ENCODE measurements at regions of chr3 and their contacts with region 1.

Region 1: DNA sequence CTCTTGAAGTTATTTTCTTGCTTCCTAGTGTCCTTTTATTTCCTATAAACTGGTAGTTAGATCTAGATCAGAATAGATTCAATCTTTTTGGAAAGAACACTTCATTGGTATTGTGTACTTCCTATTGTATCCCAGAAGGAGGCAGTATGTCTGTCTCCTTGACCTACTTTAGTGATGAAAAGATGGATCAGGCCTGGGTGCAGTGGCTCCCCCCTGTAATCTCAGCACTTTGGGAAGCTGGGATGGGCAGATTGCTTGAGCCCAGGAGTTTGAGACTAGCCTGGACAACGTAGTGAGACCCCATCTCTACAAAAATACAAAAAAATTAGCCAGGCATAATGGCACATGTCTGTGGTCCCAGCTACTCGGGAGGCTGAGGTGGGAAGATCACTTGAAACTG is 12.0 kb downstream of the BSN start:
- DNase-seq: no peak
- H3K4me3 ChIP-seq: no peak overlapping the region
- H3K27ac ChIP-seq: no peak overlapping the region
- H3K4me1 ChIP-seq: peaks cover 0 to 12% (median 6%) of the 10 kb centered on the region in 4 experiments; a peak in 5 of 7 replicates
- H3K27me3 ChIP-seq: no peaks in the 10 kb centered on the region
- CTCF ChIP-seq: peak in 2 of 3 experiments; percentile 42 to 69; a peak in 3 of 4 replicates
- EP300 ChIP-seq: no peak
- POLR2A ChIP-seq: no peak
- RAD21 ChIP-seq: peak; percentile 53 to 57

Region 2: GRCh38 chr3:49469936-49470713 is 96.2 kb before region 1 on chr3 and contains the start of gene DAG1:
- CTCF ChIA-PET with region 1: no interaction called
- POLR2A ChIA-PET with region 1: no interaction called
- DNase-seq: peak; percentile 87 to 98
- H3K4me3 ChIP-seq: peak within 1 kb of the TSS; percentile 74 to 94 (median 84)
- H3K27ac ChIP-seq: peak within 1 kb of the TSS; percentile 92
- H3K4me1 ChIP-seq: peaks cover 6 to 19% (median 13%) of the 10 kb centered on the region in 4 experiments
- H3K27me3 ChIP-seq: no peaks in the 10 kb centered on the region
- CTCF ChIP-seq: no peak
- EP300 ChIP-seq: no peak
- POLR2A ChIP-seq: peak; percentile 58 to 83
- RAD21 ChIP-seq: no peak
- total RNA-seq, gene DAG1: 137 and 138 TPM in 2 replicates

Region 3: DNA sequence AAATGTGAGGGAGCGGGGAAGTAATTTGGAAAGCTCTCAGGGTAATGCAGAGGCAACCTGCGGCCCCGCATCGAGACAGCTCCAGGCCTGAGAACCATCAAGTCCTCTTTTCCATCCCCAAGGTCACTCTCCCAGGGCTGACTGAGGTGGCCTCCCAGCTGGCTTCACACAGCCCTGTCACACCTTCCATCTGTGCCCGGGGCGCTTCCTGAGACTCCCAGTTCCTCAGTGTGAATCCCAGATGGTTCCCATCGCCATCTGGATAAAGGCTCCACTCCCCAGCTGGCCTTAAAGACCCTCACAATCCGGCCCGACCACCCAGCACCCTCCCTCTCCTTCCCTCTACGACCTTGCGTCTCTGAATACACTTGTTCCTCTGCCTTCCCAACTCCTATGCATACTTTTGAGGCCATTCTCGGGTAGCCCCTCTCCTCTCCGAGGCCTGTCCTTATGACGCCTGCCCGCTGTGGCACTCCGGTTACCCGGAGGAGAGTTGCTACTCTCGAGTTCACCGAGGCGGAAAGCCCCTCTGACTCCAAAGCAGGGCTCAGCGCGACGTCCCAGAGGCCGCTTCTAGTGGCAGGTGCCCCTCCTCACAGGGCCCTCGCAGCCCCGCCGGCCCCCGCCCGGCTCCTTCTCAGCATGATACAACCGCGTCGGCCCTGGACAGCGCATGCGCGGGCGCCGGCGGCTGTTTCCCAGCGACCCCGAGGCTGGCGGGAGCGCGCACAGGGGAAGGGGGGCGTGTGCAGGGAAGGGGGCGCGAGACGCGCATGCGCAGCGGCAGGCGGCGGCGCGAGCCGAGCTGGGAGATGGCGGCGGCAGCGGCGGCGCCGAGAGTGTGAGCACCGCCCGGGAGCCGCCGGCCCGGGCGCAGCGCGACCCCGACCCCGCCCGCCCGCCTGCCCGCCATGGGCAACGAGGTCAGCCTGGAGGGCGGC is 12.3 kb before region 1 on chr3 and contains the start of gene BSN:
- CTCF ChIA-PET with region 1: interaction called, 19 read pairs
- POLR2A ChIA-PET with region 1: no interaction called
- DNase-seq: peak; percentile 76 to 97
- H3K4me3 ChIP-seq: peak within 1 kb of the TSS; percentile 78 to 96 (median 90)
- H3K27ac ChIP-seq: peak within 1 kb of the TSS; percentile 27; the same call in 1 of the 2 replicates
- H3K4me1 ChIP-seq: peaks cover 0 to 14% (median 4%) of the 10 kb centered on the region in 4 experiments; a peak in 5 of 7 replicates
- H3K27me3 ChIP-seq: peaks cover 0 to 11% (median 6%) of the 10 kb centered on the region in 4 experiments; a peak in 3 of 7 replicates
- CTCF ChIP-seq: peak in 1 of 3 experiments; percentile 2; a peak in 1 of 4 replicates
- EP300 ChIP-seq: no peak
- POLR2A ChIP-seq: no peak
- RAD21 ChIP-seq: no peak
- total RNA-seq, gene BSN: 2.9 and 3.0 TPM in 2 replicates

Region 4: DNA sequence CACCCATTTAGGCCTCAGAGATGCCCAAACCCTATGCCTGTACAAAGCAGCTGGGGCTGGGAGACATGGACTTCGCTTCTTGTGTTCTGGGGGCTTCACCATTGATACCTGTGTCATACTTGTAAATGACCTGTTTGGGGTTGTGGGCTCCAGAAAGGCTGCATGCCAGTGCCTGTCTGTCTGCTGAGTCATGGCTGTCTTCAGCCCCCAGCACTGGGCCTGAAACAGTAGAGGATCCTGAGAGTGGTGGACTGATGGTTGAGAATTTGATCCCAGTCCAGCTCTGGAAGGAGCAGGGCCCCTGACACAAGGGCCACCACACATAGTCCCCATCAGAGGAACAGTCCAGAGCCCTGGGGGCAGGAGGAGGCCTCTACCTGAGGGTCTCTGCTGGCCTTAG is 83.3 kb after region 1 on chr3:
- CTCF ChIA-PET with region 1: interaction called, 12 read pairs
- POLR2A ChIA-PET with region 1: no interaction called
- DNase-seq: no peak
- H3K4me3 ChIP-seq: no peak overlapping the region
- H3K27ac ChIP-seq: no peak overlapping the region
- H3K4me1 ChIP-seq: no peaks in the 10 kb centered on the region; a peak in 1 of 7 replicates
- H3K27me3 ChIP-seq: no peaks in the 10 kb centered on the region
- CTCF ChIP-seq: no peak
- EP300 ChIP-seq: no peak
- POLR2A ChIP-seq: no peak
- RAD21 ChIP-seq: no peak

Region 5: GRCh38 chr3:49656541-49657112 is 90.3 kb after region 1 on chr3:
- CTCF ChIA-PET with region 1: interaction called, 12 read pairs
- POLR2A ChIA-PET with region 1: interaction called, 3 read pairs
- DNase-seq: no peak
- H3K4me3 ChIP-seq: no peak overlapping the region
- H3K27ac ChIP-seq: no peak overlapping the region
- H3K4me1 ChIP-seq: no peaks in the 10 kb centered on the region
- H3K27me3 ChIP-seq: no peaks in the 10 kb centered on the region
- CTCF ChIP-seq: peak in 2 of 3 experiments; percentile 10 to 16; a peak in 1 of 4 replicates
- EP300 ChIP-seq: no peak
- POLR2A ChIP-seq: no peak
- RAD21 ChIP-seq: peak in 1 of 2 experiments; percentile 38; a peak in 1 of 4 replicates

Region 6: GRCh38 chr3:49666592-49666991 is 100.3 kb after region 1 on chr3:
- CTCF ChIA-PET with region 1: interaction called, 101 read pairs
- POLR2A ChIA-PET with region 1: interaction called, 4 read pairs
- DNase-seq: no peak
- H3K4me3 ChIP-seq: no peak overlapping the region
- H3K27ac ChIP-seq: no peak overlapping the region
- H3K4me1 ChIP-seq: peaks cover 0 to 8% (median under 1%) of the 10 kb centered on the region in 4 experiments; a peak in 1 of 7 replicates
- H3K27me3 ChIP-seq: no peaks in the 10 kb centered on the region
- CTCF ChIP-seq: no peak
- EP300 ChIP-seq: no peak
- POLR2A ChIP-seq: no peak
- RAD21 ChIP-seq: no peak

Region 7: DNA sequence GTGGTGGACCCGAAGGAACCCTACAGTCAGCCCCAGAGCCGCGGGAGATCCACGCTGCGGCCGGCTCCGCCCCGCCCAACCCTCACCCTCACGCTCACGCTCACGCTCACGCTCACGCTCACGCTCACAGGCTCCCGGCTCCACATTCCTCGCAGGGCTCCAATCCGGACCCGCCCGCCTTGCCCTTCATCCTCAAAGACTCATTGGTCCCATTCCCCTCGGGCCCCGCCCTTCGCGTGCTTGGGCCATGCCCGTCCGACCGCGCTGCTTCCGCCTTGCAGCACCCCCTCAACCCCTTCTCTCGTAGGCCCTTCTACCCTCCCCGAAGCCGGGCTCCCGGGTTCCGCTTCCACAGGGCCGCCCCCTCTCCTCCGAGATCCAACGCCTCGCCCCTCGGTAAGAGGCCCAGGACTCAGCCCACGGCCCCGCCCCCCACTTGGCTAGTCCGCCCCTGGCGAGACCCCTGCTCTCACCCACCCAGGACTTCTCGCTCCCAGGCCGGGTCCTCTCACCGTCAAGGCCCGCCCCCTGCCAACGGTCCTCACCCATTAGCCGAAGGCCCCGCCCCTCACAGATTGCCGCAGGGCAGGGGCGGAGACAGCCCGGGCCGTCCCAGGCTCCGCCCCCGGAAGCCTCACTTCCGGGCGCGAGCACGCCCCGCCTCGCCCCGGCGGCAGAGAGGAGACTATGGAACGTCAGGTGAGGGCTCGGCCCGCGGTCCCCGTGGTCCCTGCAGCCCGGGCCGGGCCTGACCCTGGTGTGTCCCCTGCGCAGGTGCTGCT is 107.6 kb after region 1 on chr3 and contains the start of gene APEH:
- CTCF ChIA-PET with region 1: interaction called, 101 read pairs
- POLR2A ChIA-PET with region 1: interaction called, 4 read pairs
- DNase-seq: peak; percentile 88 to 99
- H3K4me3 ChIP-seq: peak within 1 kb of the TSS; percentile 84 to 91 (median 86)
- H3K27ac ChIP-seq: peak within 1 kb of the TSS; percentile 90
- H3K4me1 ChIP-seq: peaks cover 0 to 8% (median 5%) of the 10 kb centered on the region in 4 experiments; a peak in 4 of 7 replicates
- H3K27me3 ChIP-seq: no peaks in the 10 kb centered on the region; a peak in 1 of 7 replicates
- CTCF ChIP-seq: no peak
- EP300 ChIP-seq: 0 out of 3 replicates have a peak, but pooled peaks of 1 of the 2 experiments have one; percentile 6
- POLR2A ChIP-seq: peak in 1 of 2 experiments; percentile 66; a peak in 2 of 3 replicates
- RAD21 ChIP-seq: no peak
- total RNA-seq, gene APEH: 222 and 236 TPM in 2 replicates

Measured in H1 (cell line).